PC-9 (cell line): ENCODE measurements at regions of chr13 and their contacts with region 1.

Region 1: GRCh38 chr13:44826591-44827350 is 162.5 kb downstream of the NUFIP1 start:
- DNase-seq: no peak
- H3K4me3 ChIP-seq: no peak overlapping the region
- H3K27ac ChIP-seq: no peak overlapping the region
- H3K4me1 ChIP-seq: no peaks in the 10 kb centered on the region
- H3K27me3 ChIP-seq: no peaks in the 10 kb centered on the region
- CTCF ChIP-seq: no peak

Region 2: GRCh38 chr13:43915451-43915850 is 911.3 kb before region 1 on chr13:
- CTCF ChIA-PET with region 1: no interaction called
- POLR2A ChIA-PET with region 1: interaction called, 16 read pairs
- intact Hi-C with region 1: no loop called
- DNase-seq: no peak
- H3K4me3 ChIP-seq: no peak overlapping the region
- H3K27ac ChIP-seq: no peak overlapping the region
- H3K4me1 ChIP-seq: no peaks in the 10 kb centered on the region
- H3K27me3 ChIP-seq: no peaks in the 10 kb centered on the region
- CTCF ChIP-seq: no peak